ENCODE measurements at regions of chr6 and their contacts with region 1.

Region 1: DNA sequence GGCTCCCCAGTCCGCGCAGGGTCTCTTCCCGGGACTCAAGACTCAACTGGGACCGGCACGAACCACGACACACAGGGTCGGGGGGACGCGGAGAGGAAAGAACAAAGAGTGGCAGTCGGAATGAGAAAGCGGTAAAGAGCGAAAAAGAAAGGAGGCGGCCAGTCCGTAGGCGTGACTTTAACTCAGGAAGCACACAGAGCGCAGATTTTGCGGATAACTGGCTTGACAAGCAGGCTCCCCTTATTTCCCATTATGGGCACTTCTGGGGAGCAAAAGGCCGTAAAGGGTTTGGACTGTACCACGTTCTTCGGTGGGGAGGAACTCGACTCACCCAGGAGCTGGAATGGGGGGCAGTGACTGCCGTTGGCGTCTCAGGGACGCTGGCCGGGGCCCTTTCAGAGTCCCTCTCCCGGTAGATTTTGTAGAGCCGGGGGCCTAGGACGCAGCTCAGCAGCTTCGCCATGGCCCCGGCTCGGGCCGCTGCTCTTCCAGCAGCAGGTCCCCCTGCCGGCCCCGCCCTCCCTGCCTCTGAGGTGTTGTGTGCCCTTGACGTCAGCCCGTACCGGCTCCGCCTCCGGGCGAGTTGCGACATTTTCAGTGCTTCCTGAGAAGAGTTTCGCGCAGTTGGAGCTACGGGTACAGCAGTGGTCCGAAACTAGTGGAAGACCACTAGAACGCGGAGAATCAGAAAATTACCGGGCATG is at the start of gene ABHD16A:
- DNase-seq: peak; percentile 99
- ATAC-seq: peak; percentile 91
- H3K4me3 Mint-ChIP-seq: peak within 1 kb of the TSS; percentile 99
- H3K27ac Mint-ChIP-seq: peak within 1 kb of the TSS; percentile 97
- H3K4me1 Mint-ChIP-seq: peaks cover 24% of the 10 kb centered on the region
- H3K27me3 Mint-ChIP-seq: no peaks in the 10 kb centered on the region
- total RNA-seq, gene ABHD16A: 20.9 to 25.1 TPM

Region 2: DNA sequence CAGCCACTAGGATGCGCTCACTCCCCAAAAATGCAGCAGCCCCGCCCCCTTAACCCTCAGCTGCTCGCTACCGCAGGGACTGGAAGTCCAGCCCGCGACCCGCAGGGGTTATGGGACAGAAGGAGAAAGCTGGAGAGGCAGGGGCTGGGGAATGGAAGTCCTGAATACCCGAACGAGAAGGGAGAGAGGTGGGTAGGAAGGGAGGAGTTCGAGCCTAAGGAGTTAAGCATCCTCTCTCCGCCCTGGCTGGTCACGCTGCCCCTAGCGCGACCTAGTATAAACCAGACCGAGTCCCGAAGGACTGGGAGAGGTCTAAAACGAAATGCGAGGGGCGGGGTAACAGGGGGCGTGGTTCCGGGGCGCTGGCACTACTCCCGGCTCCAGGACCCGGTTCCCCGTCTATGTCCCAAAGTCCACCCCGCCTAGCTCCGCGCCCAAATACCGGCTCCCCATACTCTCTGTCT is 26.6 kb after region 1 on chr6:
- CTCF ChIA-PET with region 1: interaction called, 3 read pairs
- POLR2A ChIA-PET with region 1: interaction called, 3 read pairs
- intact Hi-C with region 1: loop called in 1 of 2 experiments (anchors 1 kb)
- DNase-seq: peak; percentile 86
- ATAC-seq: peak; percentile 59
- H3K4me3 Mint-ChIP-seq: peak overlapping the region; percentile 69
- H3K27ac Mint-ChIP-seq: peak overlapping the region; percentile 5
- H3K4me1 Mint-ChIP-seq: peaks cover 65% of the 10 kb centered on the region
- H3K27me3 Mint-ChIP-seq: no peaks in the 10 kb centered on the region

Region 3: GRCh38 chr6:31827286-31828079 is 124.5 kb after region 1 on chr6 and contains the start of gene HSPA1B:
- CTCF ChIA-PET with region 1: interaction called, 4 read pairs
- POLR2A ChIA-PET with region 1: no interaction called
- intact Hi-C with region 1: loop called in 1 of 2 experiments (anchors 2 kb)
- DNase-seq: peak; percentile 97
- ATAC-seq: peak; percentile 83
- H3K4me3 Mint-ChIP-seq: peak within 1 kb of the TSS; percentile 77
- H3K27ac Mint-ChIP-seq: peak within 1 kb of the TSS; percentile 92
- H3K4me1 Mint-ChIP-seq: peaks cover 43% of the 10 kb centered on the region
- H3K27me3 Mint-ChIP-seq: no peaks in the 10 kb centered on the region
- total RNA-seq, gene HSPA1B: 54.6 to 61.1 TPM

Region 4: GRCh38 chr6:31862344-31863227 is 159.6 kb after region 1 on chr6 and contains the start of gene NEU1:
- CTCF ChIA-PET with region 1: interaction called, 4 read pairs
- POLR2A ChIA-PET with region 1: no interaction called
- intact Hi-C with region 1: loop called in 1 of 2 experiments (anchors 1 kb)
- DNase-seq: peak; percentile 100
- ATAC-seq: peak; percentile 98
- H3K4me3 Mint-ChIP-seq: peak within 1 kb of the TSS; percentile 90
- H3K27ac Mint-ChIP-seq: peak within 1 kb of the TSS; percentile 91
- H3K4me1 Mint-ChIP-seq: peaks cover 27% of the 10 kb centered on the region
- H3K27me3 Mint-ChIP-seq: no peaks in the 10 kb centered on the region
- total RNA-seq, gene NEU1: 11.6 to 11.8 TPM

Region 5: GRCh38 chr6:31971993-31972708 is 269.2 kb after region 1 on chr6 and contains the start of gene DXO:
- CTCF ChIA-PET with region 1: no interaction called
- POLR2A ChIA-PET with region 1: interaction called, 5 read pairs
- intact Hi-C with region 1: loop called in 1 of 2 experiments (anchors 1 kb)
- DNase-seq: peak; percentile 99
- ATAC-seq: peak; percentile 96
- H3K4me3 Mint-ChIP-seq: peak within 1 kb of the TSS; percentile 96
- H3K27ac Mint-ChIP-seq: peak within 1 kb of the TSS; percentile 99
- H3K4me1 Mint-ChIP-seq: peaks cover 43% of the 10 kb centered on the region
- H3K27me3 Mint-ChIP-seq: no peaks in the 10 kb centered on the region
- total RNA-seq, gene DXO: 12.6 to 13.9 TPM

Region 6: GRCh38 chr6:32483968-32484636 is 781.1 kb after region 1 on chr6:
- CTCF ChIA-PET with region 1: no interaction called
- POLR2A ChIA-PET with region 1: no interaction called
- intact Hi-C with region 1: no loop called
- DNase-seq: no peak
- ATAC-seq: no peak
- H3K4me3 Mint-ChIP-seq: no peak overlapping the region
- H3K27ac Mint-ChIP-seq: no peak overlapping the region
- H3K4me1 Mint-ChIP-seq: no peaks in the 10 kb centered on the region
- H3K27me3 Mint-ChIP-seq: peaks cover 6% of the 10 kb centered on the region

Measured in activated CD4-positive, alpha-beta T cell treated with anti-CD3 and anti-CD28 coated beads for 36 hours (primary cell).